Endothelial cell of umbilical vein (primary cell): ENCODE measurements at regions of chr3 and their contacts with region 1.

Region 1: GRCh38 chr3:39809181-39809994 is at the start of gene MYRIP:
- DNase-seq: peak; percentile 81
- H3K4me3 ChIP-seq: peak within 1 kb of the TSS; percentile 61 to 79 (median 70)
- H3K27ac ChIP-seq: no peak within 1 kb of the TSS
- H3K4me1 ChIP-seq: peaks cover 28% of the 10 kb centered on the region
- H3K27me3 ChIP-seq: no peaks in the 10 kb centered on the region
- CTCF ChIP-seq: no peak
- POLR2A ChIP-seq: peak; percentile 59
- total RNA-seq, gene MYRIP: 8.9 and 11.9 TPM in 2 replicates

Region 2: DNA sequence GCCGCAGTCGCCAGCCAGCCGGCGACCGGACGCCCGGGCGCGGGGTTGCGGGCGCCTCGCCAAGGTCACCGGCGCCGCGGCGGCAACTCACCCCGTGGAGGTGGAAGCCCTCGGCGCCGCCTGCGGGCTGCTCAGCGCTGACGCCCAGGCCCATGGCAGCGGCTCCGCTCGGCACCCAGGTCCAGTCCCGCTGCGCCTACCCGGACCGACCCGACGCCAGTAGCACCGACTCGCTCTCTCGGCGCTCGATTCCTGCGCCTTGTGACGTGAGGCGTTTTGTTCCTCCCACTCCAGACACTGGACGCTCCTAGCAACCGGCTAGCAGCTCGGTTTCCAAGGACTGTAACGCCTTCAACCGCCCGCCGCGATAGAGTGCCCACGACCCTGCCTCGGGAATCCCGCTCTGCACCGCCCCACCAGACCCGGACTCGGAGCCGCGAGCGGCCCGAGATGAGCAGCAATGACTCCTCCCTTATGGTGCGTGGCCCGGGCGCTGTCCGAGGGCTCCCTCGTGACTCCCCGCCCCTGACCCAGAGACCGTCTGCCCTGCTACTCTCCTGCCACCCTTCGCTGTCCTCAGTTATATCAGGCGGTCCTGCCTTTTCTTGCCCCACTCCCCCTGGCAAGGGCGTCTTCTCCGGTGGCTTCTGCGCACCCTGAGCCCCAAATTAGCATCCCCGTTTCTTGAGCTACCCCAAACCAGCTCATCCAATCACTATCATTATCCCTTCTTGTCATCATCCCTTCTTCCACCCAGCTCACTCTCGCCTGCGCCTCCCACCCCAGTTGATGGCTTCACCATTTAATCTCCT is 701.8 kb before region 1 on chr3 and contains the starts of genes GORASP1 and TTC21A:
- CTCF ChIA-PET with region 1: no interaction called
- POLR2A ChIA-PET with region 1: no interaction called
- dilution Hi-C with region 1: no loop called
- intact Hi-C with region 1: no loop called
- DNase-seq: peak; percentile 86
- H3K4me3 ChIP-seq: peak within 1 kb of the TSS; percentile 69 to 84 (median 78)
- H3K27ac ChIP-seq: peak within 1 kb of the TSS; percentile 75
- H3K4me1 ChIP-seq: peaks cover 18% of the 10 kb centered on the region
- H3K27me3 ChIP-seq: no peaks in the 10 kb centered on the region
- CTCF ChIP-seq: no peak
- POLR2A ChIP-seq: peak; percentile 67
- total RNA-seq, gene GORASP1: 68.0 and 74.7 TPM in 2 replicates
- total RNA-seq, gene TTC21A: 6.3 and 7.8 TPM in 2 replicates

Region 3: DNA sequence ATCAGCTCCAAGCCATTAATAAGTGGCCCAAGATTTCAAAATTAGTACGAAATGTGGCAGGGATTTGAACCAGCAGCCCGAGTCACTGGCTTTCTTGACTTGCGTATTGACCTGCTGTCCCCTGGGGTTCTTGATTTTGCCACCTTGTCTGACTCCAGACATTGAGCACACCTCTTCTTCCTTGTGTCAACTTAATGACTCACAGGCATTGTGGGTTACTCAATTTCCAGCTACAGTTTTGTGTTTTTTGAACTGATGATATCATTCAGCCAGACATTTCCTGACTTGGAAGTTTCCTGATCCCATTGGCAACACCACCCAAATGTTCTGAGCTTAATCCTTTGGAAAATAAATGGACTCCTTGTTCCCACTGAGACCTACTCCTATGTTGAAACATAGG is 277.7 kb before region 1 on chr3:
- CTCF ChIA-PET with region 1: no interaction called
- POLR2A ChIA-PET with region 1: no interaction called
- dilution Hi-C with region 1: no loop called
- intact Hi-C with region 1: loop called (anchors 2 kb)
- DNase-seq: peak; percentile 98
- H3K4me3 ChIP-seq: no peak overlapping the region
- H3K27ac ChIP-seq: peak overlapping the region; percentile 84
- H3K4me1 ChIP-seq: peaks cover 27% of the 10 kb centered on the region
- H3K27me3 ChIP-seq: no peaks in the 10 kb centered on the region
- CTCF ChIP-seq: no peak
- POLR2A ChIP-seq: peak; percentile 43

Region 4: GRCh38 chr3:39724233-39724846 is 85.0 kb before region 1 on chr3:
- CTCF ChIA-PET with region 1: interaction called, 119 read pairs
- POLR2A ChIA-PET with region 1: no interaction called
- dilution Hi-C with region 1: no loop called
- intact Hi-C with region 1: loop called (anchors 1 kb)
- DNase-seq: peak; percentile 58
- H3K4me3 ChIP-seq: no peak overlapping the region
- H3K27ac ChIP-seq: no peak overlapping the region
- H3K4me1 ChIP-seq: no peaks in the 10 kb centered on the region
- H3K27me3 ChIP-seq: no peaks in the 10 kb centered on the region
- CTCF ChIP-seq: peak; percentile 40 to 41
- POLR2A ChIP-seq: no peak

Region 5: GRCh38 chr3:39911465-39912309 is 102.3 kb after region 1 on chr3:
- CTCF ChIA-PET with region 1: interaction called, 30 read pairs
- POLR2A ChIA-PET with region 1: no interaction called
- dilution Hi-C with region 1: no loop called
- intact Hi-C with region 1: loop called (anchors 2 kb)
- DNase-seq: peak; percentile 97
- H3K4me3 ChIP-seq: no peak overlapping the region
- H3K27ac ChIP-seq: peak overlapping the region; percentile 67
- H3K4me1 ChIP-seq: peaks cover 48% of the 10 kb centered on the region
- H3K27me3 ChIP-seq: no peaks in the 10 kb centered on the region
- CTCF ChIP-seq: peak in 1 of 2 donors; percentile 44
- POLR2A ChIP-seq: no peak

Region 6: DNA sequence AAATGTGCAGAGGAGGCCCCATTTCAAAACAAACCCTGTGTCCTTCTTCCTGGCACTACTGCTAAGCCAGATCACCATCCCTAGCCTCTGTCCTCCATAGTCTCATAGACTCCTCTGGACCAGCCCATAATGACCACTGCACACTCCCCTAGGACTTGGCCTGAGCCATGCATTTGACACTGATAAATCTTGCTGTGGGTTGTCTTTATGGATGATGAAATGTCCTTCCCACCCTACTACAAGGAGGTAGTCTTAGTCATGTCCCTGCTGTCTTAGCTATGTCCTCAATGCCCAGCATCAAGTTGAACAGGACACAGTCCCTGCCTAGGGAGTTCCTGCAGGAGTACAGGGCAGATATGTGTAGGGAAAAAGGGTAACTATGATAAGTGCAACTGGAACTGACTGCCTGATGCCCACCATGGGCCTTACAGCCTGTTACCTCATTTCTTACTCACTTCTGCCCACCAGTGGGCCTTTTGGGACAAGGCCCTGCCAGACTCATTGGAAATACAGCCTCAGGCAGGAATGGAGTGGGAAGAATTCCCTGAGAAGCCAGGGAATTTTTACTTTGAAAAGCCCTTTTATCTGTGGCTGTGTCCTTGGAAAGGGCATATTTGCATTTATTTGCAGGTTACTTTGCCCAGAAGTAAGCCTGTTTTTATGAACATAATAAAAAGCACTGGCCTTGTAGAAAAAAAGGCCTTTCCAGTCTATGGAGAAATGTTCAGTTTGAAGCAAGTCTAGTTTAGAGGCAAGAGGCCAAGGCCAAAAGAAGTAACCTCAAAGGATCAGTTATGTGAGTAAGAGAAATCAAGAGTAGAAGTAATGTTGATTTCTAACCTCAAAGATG is 300.5 kb after region 1 on chr3:
- CTCF ChIA-PET with region 1: interaction called, 13 read pairs
- POLR2A ChIA-PET with region 1: no interaction called
- dilution Hi-C with region 1: no loop called
- intact Hi-C with region 1: loop called (anchors 5 kb)
- DNase-seq: peak; percentile 61
- H3K4me3 ChIP-seq: no peak overlapping the region
- H3K27ac ChIP-seq: no peak overlapping the region
- H3K4me1 ChIP-seq: no peaks in the 10 kb centered on the region
- H3K27me3 ChIP-seq: no peaks in the 10 kb centered on the region
- CTCF ChIP-seq: peak; percentile 28 to 64
- POLR2A ChIP-seq: no peak

Region 7: DNA sequence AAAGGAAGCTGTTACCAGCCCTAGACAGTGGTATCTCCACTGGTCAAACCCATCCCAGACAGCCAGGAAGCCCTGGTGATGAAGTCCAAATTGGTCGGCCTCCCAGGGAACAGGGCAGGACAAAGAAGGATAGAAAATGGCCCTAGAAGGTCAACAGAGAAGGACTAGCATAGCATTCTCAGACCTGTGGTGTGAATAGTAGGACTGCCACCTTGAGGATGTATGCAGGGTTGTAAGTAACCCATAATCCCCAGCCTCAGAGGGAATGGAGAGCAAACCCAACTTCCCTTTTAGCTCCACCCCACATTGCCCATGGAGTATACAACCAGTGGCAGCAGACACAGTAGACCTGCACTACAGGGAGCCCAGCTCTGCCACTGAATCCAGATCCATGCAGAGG is 431.5 kb after region 1 on chr3:
- CTCF ChIA-PET with region 1: no interaction called
- POLR2A ChIA-PET with region 1: no interaction called
- dilution Hi-C with region 1: no loop called
- intact Hi-C with region 1: no loop called
- DNase-seq: no peak
- H3K4me3 ChIP-seq: no peak overlapping the region
- H3K27ac ChIP-seq: no peak overlapping the region
- H3K4me1 ChIP-seq: no peaks in the 10 kb centered on the region
- H3K27me3 ChIP-seq: no peaks in the 10 kb centered on the region
- CTCF ChIP-seq: no peak
- POLR2A ChIP-seq: no peak

Region 8: GRCh38 chr3:40309418-40309924 is 500.1 kb after region 1 on chr3 and contains the start of gene EIF1B:
- CTCF ChIA-PET with region 1: interaction called, 3 read pairs
- POLR2A ChIA-PET with region 1: no interaction called
- dilution Hi-C with region 1: no loop called
- intact Hi-C with region 1: loop called (anchors 1 kb)
- DNase-seq: peak; percentile 99
- H3K4me3 ChIP-seq: peak within 1 kb of the TSS; percentile 85 to 100 (median 98)
- H3K27ac ChIP-seq: peak within 1 kb of the TSS; percentile 93
- H3K4me1 ChIP-seq: peaks cover 14% of the 10 kb centered on the region
- H3K27me3 ChIP-seq: no peaks in the 10 kb centered on the region
- CTCF ChIP-seq: peak; percentile 96 to 97
- POLR2A ChIP-seq: peak; percentile 96
- total RNA-seq, gene EIF1B: 44.1 and 46.0 TPM in 2 replicates